Activated T-helper 2 cell treated with anti-CD3 and anti-CD28 coated beads, Interferon-gamma antibody, Interleukin-2, Interleukin-4, amounts not matched to agents 10 μg/mL and 5 μg/mL and 100 μg/mL, durations not matched to agents 14 hours and 24 hours and 36 hours (primary cell): ENCODE measurements at regions of chr2 and their contacts with region 1.

Region 1: GRCh38 chr2:100291120-100291970 is 31.0 kb downstream of the LONRF2 start:
- DNase-seq: peak; percentile 77
- H3K4me3 Mint-ChIP-seq: no peak overlapping the region
- H3K27ac Mint-ChIP-seq: no peak overlapping the region
- H3K4me1 Mint-ChIP-seq: peaks cover 14% of the 10 kb centered on the region
- H3K27me3 Mint-ChIP-seq: peaks cover 21% of the 10 kb centered on the region

Region 2: DNA sequence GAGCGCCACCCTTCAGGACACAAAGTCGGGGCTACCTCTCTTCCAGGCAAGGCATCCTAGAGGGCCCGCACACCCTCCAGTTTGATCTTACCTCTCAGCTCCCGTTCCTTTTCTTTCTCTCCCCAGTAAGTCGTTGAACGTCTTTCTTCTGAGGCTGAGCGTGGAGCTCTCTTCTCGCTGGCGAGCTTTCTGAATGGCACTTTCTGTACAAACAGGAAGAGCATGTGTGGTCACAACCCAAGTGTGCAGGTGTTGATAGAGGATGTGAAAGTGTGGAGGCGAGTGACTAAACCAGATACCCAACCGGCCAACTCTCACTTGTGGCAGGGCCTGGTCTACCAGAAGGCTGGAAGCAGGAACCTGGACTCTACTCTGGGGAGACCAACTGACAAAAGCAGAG is 149.0 kb before region 1 on chr2 and contains the start of gene AFF3:
- intact Hi-C with region 1: loop called (anchors 2 kb)
- DNase-seq: peak; percentile 59
- H3K4me3 Mint-ChIP-seq: peak within 1 kb of the TSS; percentile 80
- H3K27ac Mint-ChIP-seq: peak within 1 kb of the TSS; percentile 48
- H3K4me1 Mint-ChIP-seq: peaks cover 42% of the 10 kb centered on the region
- H3K27me3 Mint-ChIP-seq: peaks cover 30% of the 10 kb centered on the region
- total RNA-seq, gene AFF3: 1.4 and 1.7 TPM in 2 replicates

Region 3: DNA sequence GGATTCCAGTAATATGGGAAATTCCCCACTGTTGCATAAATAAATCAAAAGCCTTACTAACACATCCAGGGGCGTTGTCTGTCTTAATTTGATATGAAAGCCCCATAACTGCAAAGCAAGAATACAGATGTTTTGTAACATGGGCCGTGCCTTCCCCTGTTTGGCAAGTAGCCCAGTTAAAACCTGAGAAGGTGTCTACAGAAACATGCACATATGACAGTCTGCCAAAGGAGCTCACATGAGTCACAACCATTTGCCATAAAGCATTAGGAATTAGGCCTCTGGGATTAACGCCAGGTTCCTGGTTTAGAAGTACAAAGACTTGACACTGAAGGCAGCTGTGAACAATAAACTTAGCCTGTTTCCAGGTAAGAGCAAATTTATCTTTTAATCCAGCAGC is 74.1 kb after region 1 on chr2:
- intact Hi-C with region 1: loop called (anchors 5 kb)
- DNase-seq: no peak
- H3K4me3 Mint-ChIP-seq: no peak overlapping the region
- H3K27ac Mint-ChIP-seq: no peak overlapping the region
- H3K4me1 Mint-ChIP-seq: peaks cover 29% of the 10 kb centered on the region
- H3K27me3 Mint-ChIP-seq: peaks cover 2% of the 10 kb centered on the region

Region 4: DNA sequence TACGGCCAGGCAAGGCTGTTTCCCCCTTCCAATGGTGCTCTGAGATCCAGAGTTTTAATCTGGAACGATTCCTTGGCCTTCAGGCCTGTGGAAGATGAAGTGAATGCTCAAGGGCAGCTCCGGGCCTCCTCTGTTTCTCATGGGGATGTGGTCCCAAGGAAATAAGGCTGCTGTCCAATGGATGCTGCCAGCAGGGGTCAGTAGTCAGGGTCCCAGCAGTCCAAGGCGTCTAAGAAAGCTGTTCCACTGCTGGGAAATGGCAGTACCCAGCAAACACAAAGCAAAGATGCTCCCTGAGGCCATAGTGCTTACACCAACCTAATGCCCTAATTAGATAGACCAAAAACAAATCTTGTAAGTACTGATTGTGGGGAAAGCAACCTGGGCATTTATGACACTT is 191.4 kb after region 1 on chr2:
- intact Hi-C with region 1: no loop called
- DNase-seq: no peak
- H3K4me3 Mint-ChIP-seq: no peak overlapping the region
- H3K27ac Mint-ChIP-seq: no peak overlapping the region
- H3K4me1 Mint-ChIP-seq: no peaks in the 10 kb centered on the region
- H3K27me3 Mint-ChIP-seq: no peaks in the 10 kb centered on the region